K562 (cell line): ENCODE measurements at regions of chr17 and their contacts with region 1.

Region 1: GRCh38 chr17:29931231-29931932 is 1.4 kb upstream of the SSH2 start:
- DNase-seq: peak; percentile 44 to 83 (median 54)
- ATAC-seq: peak; percentile 75
- H3K4me3 ChIP-seq: no peak overlapping the region; the same call in 1 of the 2 replicates
- H3K27ac ChIP-seq: no peak overlapping the region
- H3K4me1 ChIP-seq: peaks cover 4 to 7% of the 10 kb centered on the region in 2 experiments; a peak in 3 of 5 replicates
- H3K27me3 ChIP-seq: no peaks in the 10 kb centered on the region
- CTCF ChIP-seq: peak; percentile 83 to 90 (median 90)
- EP300 ChIP-seq: no peak
- POLR2A ChIP-seq: no peak
- RAD21 ChIP-seq: peak; percentile 71 to 91

Region 2: DNA sequence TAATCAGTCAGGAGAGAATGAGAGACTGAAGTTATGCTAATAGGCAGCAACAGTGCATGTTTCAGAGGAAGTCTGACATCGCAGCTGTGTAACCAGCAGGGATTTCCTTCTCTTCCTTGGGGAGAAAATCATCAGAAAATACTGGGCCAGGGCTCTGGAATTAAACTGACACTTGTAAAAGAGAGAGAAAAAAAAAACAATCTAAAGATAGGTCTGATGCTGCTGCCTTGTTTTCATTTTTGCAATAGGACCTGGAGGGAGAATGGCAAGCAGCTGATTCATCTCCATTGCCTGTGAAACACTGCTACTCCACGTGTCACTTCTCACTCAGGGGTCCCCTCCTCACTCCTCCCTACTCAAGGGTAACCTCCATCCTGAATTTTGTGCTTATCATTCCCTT is 291.0 kb before region 1 on chr17:
- CTCF ChIA-PET with region 1: interaction called, 11 read pairs
- POLR2A ChIA-PET with region 1: interaction called, 9 read pairs
- in situ Hi-C with region 1: loop called (anchors 5 kb)
- intact Hi-C with region 1: loop called (anchors 1 kb)
- DNase-seq: no peak
- ATAC-seq: no peak
- H3K4me3 ChIP-seq: no peak overlapping the region
- H3K27ac ChIP-seq: no peak overlapping the region
- H3K4me1 ChIP-seq: peaks cover 12 to 22% of the 10 kb centered on the region in 2 experiments
- H3K27me3 ChIP-seq: no peaks in the 10 kb centered on the region
- CTCF ChIP-seq: no peak
- EP300 ChIP-seq: no peak
- POLR2A ChIP-seq: no peak
- RAD21 ChIP-seq: no peak

Region 3: GRCh38 chr17:29807520-29808351 is 123.6 kb before region 1 on chr17:
- CTCF ChIA-PET with region 1: interaction called, 62 read pairs
- POLR2A ChIA-PET with region 1: interaction called, 4 read pairs
- in situ Hi-C with region 1: loop called (anchors 5 kb)
- intact Hi-C with region 1: loop called (anchors 1 kb)
- DNase-seq: peak; percentile 64 to 78 (median 68)
- ATAC-seq: peak; percentile 91
- H3K4me3 ChIP-seq: no peak overlapping the region
- H3K27ac ChIP-seq: no peak overlapping the region
- H3K4me1 ChIP-seq: peaks cover 3% of the 10 kb centered on the region in 2 experiments; a peak in 1 of 5 replicates
- H3K27me3 ChIP-seq: no peaks in the 10 kb centered on the region
- CTCF ChIP-seq: peak; percentile 74 to 90 (median 77)
- EP300 ChIP-seq: no peak
- POLR2A ChIP-seq: no peak
- RAD21 ChIP-seq: peak; percentile 82 to 85

Region 4: DNA sequence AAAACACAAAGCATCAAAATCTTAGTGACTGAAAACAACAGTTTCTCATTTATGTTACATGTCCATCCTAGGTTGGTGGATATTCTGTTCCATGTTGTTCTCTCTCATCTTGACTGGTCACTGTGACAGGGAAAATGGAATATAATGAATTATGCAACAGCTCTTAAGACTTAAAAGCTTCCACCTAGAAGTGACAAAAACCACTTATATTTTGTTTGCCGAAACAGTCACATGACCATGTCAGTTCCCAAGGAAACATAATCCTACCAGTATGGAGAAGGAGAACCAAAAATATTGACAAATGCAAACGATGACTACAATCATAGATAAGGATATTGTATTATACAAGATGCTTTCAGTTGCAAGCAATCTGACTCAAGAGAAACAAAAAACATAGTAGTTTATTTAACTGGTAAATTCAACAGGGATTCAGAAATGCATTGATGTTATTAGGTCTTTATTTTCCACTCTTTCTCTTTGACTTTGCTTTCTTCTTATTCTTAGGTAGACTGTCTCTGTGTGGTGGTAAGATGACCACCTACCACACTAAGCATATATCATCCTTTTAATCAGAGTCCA is 105.2 kb before region 1 on chr17:
- CTCF ChIA-PET with region 1: no interaction called
- POLR2A ChIA-PET with region 1: no interaction called
- in situ Hi-C with region 1: no loop called
- intact Hi-C with region 1: no loop called
- DNase-seq: no peak
- ATAC-seq: no peak
- H3K4me3 ChIP-seq: no peak overlapping the region
- H3K27ac ChIP-seq: no peak overlapping the region
- H3K4me1 ChIP-seq: no peaks in the 10 kb centered on the region
- H3K27me3 ChIP-seq: no peaks in the 10 kb centered on the region
- CTCF ChIP-seq: no peak
- EP300 ChIP-seq: no peak
- POLR2A ChIP-seq: no peak
- RAD21 ChIP-seq: no peak

Region 5: DNA sequence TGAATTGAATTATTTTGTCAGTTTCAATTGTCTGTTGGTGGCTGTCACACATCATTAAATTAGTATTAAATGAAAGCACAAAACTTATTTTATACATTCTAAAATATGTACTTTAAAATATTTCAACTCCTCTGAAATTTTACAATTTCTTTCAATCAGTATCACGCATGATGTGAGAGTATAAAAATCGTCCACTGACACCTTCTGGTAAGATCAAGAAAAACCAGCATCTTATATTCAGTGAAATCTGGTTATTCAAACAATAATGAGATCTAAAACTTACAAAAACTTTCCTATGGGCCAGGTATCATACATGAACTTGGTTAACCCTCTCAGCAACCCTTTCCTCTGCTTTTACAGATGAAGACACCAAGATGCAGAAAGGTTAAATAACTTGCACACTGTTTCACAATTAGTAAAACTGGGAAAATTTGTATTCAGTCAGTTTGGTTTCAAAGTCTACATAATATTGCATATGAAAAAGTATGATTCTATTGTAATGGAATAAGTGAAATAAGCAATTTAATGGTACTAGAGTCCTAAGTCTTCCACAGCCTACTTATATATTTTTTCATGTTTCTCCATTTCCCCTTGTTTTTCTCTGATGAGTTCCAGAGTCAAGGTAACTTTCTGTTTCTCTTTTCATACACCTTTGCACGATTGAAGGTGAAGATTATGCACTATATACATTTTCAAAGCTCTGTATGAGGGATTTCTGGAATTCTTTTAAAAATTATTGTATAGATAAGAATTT is 68.8 kb after region 1 on chr17:
- CTCF ChIA-PET with region 1: interaction called, 3 read pairs
- POLR2A ChIA-PET with region 1: no interaction called
- in situ Hi-C with region 1: no loop called
- intact Hi-C with region 1: loop called (anchors 5 kb)
- DNase-seq: no peak
- ATAC-seq: no peak
- H3K4me3 ChIP-seq: no peak overlapping the region
- H3K27ac ChIP-seq: no peak overlapping the region
- H3K4me1 ChIP-seq: no peaks in the 10 kb centered on the region
- H3K27me3 ChIP-seq: no peaks in the 10 kb centered on the region; a peak in 1 of 5 replicates
- CTCF ChIP-seq: peak in 1 of 3 experiments; percentile 24; a peak in 1 of 6 replicates
- EP300 ChIP-seq: no peak
- POLR2A ChIP-seq: no peak
- RAD21 ChIP-seq: no peak

Region 6: GRCh38 chr17:30093463-30094147 is 162.2 kb after region 1 on chr17:
- CTCF ChIA-PET with region 1: no interaction called
- POLR2A ChIA-PET with region 1: no interaction called
- in situ Hi-C with region 1: no loop called
- intact Hi-C with region 1: loop called (anchors 1 kb)
- DNase-seq: peak; percentile 75 to 79 (median 78)
- ATAC-seq: peak; percentile 92
- H3K4me3 ChIP-seq: no peak overlapping the region
- H3K27ac ChIP-seq: no peak overlapping the region
- H3K4me1 ChIP-seq: peaks cover 0 to 9% of the 10 kb centered on the region in 2 experiments; a peak in 3 of 5 replicates
- H3K27me3 ChIP-seq: peaks cover 15 to 20% of the 10 kb centered on the region in 2 experiments
- CTCF ChIP-seq: peak; percentile 77 to 91 (median 82)
- EP300 ChIP-seq: no peak
- POLR2A ChIP-seq: no peak
- RAD21 ChIP-seq: peak; percentile 90 to 94